Naive thymus-derived CD8-positive, alpha-beta T cell (primary cell): ENCODE measurements at regions of chr1 and their contacts with region 1.

Region 1: DNA sequence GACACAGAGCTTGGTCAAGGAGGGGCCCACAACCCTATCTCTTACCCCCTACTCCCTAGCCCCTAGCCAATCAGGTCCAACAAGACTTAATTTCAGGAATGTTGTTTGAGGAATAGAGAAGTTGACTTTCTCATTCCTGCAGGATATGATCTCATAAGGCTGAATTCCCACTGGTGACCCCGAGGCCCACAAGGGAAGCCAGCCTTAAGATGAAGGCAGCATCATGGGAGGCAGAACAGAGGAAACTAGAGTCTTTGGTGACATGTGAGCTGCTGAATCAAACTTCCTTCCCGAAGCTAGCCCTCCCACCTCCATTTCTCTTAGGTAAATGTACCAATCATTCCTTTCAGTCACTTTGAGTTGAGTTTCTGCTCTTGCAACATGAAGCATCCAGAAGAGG is 9.1 kb upstream of the PDIK1L start:
- DNase-seq: no peak
- ATAC-seq: no peak
- H3K4me3 Mint-ChIP-seq: no peak overlapping the region
- H3K27ac Mint-ChIP-seq: no peak overlapping the region
- H3K4me1 Mint-ChIP-seq: peaks cover 4 to 8% (median 4%) of the 10 kb centered on the region in 4 donors
- H3K27me3 Mint-ChIP-seq: peaks cover 0 to 6% (median 3%) of the 10 kb centered on the region in 5 donors

Region 2: DNA sequence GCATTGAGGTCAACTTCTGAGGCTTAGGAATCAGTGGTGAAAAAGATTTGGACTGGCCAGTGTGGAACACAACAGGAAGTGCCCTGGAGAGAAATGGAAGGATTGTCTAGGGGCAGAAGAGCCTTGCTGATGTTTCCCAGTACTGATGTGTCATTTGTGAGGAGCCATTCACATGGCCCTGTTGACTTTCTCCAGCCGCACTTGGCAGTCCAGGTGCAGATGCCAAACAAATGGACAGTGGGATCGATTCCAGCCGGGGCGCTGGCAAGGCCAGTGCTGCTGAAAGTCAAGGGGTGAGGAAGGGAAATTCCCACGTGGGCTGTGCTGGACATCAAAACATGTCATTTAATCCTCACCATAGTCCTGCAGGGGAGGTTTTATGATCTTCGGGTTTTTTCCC is 30.2 kb before region 1 on chr1:
- POLR2A ChIA-PET with region 1: no interaction called
- DNase-seq: no peak
- ATAC-seq: no peak
- H3K4me3 Mint-ChIP-seq: no peak overlapping the region
- H3K27ac Mint-ChIP-seq: peak overlapping the region in 1 of 10 donors; percentile 19
- H3K4me1 Mint-ChIP-seq: peaks cover 0 to 2% (median 0%) of the 10 kb centered on the region in 4 donors
- H3K27me3 Mint-ChIP-seq: peaks cover 17 to 46% (median 19%) of the 10 kb centered on the region in 5 donors

Region 3: DNA sequence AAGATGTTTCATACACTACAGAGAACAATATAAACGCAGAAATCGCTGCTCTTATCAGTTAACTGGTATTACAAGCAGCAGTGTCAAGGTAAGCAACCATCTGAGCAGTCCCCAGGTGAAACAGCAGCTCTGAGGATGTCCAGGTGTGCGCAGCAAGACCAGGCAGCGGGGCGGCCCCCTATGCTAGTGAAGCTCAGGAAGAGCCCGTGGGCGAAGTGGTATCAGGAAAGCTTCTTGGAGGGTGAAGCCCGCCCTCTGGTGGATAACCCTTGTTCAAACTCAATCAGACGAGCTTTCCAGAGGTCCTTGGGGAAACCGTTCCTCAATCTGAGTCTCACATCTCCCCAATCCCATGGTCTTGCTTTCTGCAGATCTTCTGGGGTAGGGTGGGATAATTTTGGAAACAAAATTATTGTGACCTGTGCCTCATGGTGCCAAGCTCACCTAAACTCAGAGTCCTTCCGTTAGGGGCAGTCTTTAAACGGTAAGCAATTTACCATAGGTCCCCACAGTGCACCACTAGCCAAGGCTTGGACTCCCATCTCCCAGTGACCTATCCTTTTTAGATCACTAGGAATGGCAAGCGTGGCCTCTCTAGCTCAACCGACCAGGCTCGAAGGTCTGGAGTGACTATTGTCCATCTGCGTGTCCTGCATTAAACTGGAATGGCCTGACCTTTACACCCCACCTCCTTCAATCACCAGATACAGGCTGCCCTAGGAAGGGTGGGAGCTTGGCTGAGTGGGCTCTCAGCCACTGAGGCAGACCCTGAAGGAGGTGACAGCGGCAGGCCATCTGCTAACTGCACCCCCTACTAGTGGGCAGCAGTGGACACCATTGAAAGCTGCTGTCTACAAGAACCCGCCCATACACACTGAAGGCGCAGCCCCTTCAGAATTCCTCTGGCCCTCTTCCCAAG is 42.8 kb after region 1 on chr1:
- POLR2A ChIA-PET with region 1: interaction called, 16 read pairs
- DNase-seq: peak; percentile 54 to 86 (median 71)
- ATAC-seq: peak; percentile 84 to 97
- H3K4me3 Mint-ChIP-seq: peak overlapping the region in 2 of 10 donors; percentile 51 to 65
- H3K27ac Mint-ChIP-seq: peak overlapping the region in 1 of 10 donors; percentile 72
- H3K4me1 Mint-ChIP-seq: peaks cover 2 to 6% (median 5%) of the 10 kb centered on the region in 4 donors
- H3K27me3 Mint-ChIP-seq: peaks cover 0 to 3% (median 0%) of the 10 kb centered on the region in 5 donors